ENCODE measurements at regions of chr3 and their contacts with region 1.

Region 1: DNA sequence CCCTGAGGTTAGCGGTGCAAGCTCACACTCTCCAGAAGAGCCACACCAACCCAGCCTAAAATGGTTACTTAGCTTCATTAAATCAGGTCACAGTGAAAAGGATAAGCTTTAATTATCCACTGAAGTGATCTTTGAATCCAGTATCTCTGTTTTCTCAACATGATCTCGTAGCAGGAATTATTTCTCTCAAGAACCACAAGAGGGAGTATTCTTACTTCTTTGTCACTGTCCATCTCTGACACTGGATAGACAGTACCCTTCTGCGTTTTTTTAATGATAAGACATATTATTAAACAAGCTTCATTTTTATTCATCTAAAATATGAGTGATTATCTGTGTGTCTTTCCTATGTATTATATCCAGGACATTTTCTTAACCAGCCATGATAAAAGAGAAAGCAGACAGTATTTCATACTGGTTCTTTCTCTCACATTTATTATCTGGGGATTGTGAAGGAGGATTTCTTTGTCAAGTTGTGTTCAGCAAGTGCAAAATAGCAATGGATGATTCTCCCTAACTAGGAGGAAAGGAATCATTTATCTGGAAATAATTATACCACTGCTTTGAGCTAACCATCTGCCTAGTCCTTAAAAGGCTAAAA is 105.4 kb upstream of the CCDC54 start:
- DNase-seq: no peak
- ATAC-seq: peak; percentile 61

Region 2: GRCh38 chr3:107414325-107414964 is 142.6 kb after region 1 on chr3:
- intact Hi-C with region 1: loop called in 1 of 2 experiments (anchors 10 kb)
- DNase-seq: no peak
- ATAC-seq: no peak